Activated T-helper 2 cell treated with anti-CD3 and anti-CD28 coated beads, Interferon-gamma antibody, Interleukin-2, Interleukin-4, amounts not matched to agents 10 μg/mL and 5 μg/mL and 100 μg/mL, durations not matched to agents 14 hours and 24 hours and 36 hours (primary cell): ENCODE measurements at regions of chr6 and their contacts with region 1.

Region 1: GRCh38 chr6:125812394-125813292 is 21.9 kb downstream of the NCOA7 start:
- DNase-seq: no peak
- H3K4me3 Mint-ChIP-seq: no peak overlapping the region
- H3K27ac Mint-ChIP-seq: peak overlapping the region; percentile 3
- H3K4me1 Mint-ChIP-seq: peaks cover 61% of the 10 kb centered on the region
- H3K27me3 Mint-ChIP-seq: no peaks in the 10 kb centered on the region

Region 2: DNA sequence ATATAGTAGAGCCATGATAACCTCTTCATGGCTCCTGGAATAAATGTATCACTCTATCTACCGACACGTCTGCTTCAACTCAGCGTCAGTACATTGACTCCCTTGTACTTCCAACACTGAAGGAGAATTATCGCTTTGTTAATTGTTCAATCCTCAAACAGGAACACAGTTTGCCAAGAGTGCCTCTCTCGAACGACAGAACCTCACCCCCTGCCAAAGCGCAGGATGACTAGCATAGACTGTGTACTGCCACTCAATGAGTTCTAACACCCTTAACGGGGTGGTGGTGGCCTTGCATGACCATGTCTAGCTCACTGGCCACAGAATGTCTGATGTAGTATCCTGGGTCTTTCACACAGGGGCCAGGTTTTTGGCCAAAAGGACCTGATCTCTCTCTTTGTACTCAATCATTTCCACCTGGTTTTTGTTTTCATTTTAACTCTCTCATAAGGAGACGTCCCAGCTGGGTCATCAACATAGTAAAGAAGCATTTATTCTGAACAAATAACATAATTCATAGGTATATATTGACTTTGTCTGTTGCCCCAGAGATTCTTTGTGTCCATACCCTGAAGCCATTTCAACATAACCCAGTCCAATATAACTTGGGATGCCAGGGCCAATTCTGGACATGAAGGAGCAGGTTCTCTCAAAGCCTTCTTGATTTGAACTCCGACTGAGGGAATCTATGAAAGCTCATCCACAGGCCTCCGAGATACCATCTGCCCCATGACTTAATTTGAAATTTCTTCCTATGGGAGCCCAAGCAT is 144.4 kb before region 1 on chr6:
- intact Hi-C with region 1: no loop called
- DNase-seq: no peak
- H3K4me3 Mint-ChIP-seq: no peak overlapping the region
- H3K27ac Mint-ChIP-seq: no peak overlapping the region
- H3K4me1 Mint-ChIP-seq: no peaks in the 10 kb centered on the region
- H3K27me3 Mint-ChIP-seq: no peaks in the 10 kb centered on the region

Region 3: DNA sequence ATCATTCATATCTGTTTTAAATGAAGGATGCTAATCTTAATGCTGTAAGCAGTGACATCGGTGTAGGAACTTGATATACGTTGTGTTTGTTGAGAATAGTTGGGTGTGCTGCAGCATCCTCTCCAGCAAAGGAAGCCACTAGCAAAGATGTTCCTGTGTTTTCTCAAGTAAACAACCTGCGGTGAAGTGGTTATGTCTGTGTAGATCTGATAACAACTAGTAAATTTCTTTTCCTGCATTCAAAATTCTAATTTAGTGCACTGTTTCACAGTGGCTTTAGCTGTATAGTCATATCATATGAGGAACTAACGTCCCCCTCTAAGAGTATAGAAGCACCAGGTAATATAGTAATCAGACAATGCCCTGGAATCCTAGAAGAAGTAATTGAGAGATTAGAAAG is 16.8 kb after region 1 on chr6:
- intact Hi-C with region 1: loop called (anchors 1 kb)
- DNase-seq: no peak
- H3K4me3 Mint-ChIP-seq: no peak overlapping the region
- H3K27ac Mint-ChIP-seq: no peak overlapping the region
- H3K4me1 Mint-ChIP-seq: peaks cover 61% of the 10 kb centered on the region
- H3K27me3 Mint-ChIP-seq: no peaks in the 10 kb centered on the region